A673 (cell line): ENCODE measurements at regions of chr4 and their contacts with region 1.

Region 1: GRCh38 chr4:124111922-124112321 is 600.6 kb downstream of the ANKRD50 start:
- DNase-seq: peak; percentile 74
- H3K4me3 ChIP-seq: no peak overlapping the region
- H3K27ac ChIP-seq: no peak overlapping the region
- H3K4me1 ChIP-seq: peaks cover 5% of the 10 kb centered on the region
- H3K27me3 ChIP-seq: no peaks in the 10 kb centered on the region
- CTCF ChIP-seq: peak; percentile 68

Region 2: DNA sequence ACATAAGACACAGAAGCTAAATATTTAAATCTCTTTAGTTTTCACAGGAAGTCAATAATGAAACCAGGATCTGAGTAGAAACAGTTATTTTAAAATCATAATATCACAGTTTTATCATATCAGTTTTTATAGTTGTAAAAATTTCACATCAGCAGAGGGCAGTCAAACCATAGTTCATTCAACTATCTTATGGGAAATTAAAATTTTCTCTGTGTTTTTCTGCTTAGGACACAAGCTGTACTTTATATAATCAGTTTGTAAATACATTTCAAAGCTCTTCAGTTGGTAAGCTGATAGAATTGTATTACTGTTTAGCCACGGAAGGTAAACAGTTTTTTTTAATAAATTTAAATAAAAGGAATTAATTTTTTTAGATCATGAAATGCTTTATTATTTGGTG is 984.7 kb before region 1 on chr4:
- CTCF ChIA-PET with region 1: no interaction called
- POLR2A ChIA-PET with region 1: no interaction called
- intact Hi-C with region 1: loop called (anchors 5 kb)
- DNase-seq: peak; percentile 55
- H3K4me3 ChIP-seq: no peak overlapping the region
- H3K27ac ChIP-seq: peak overlapping the region; percentile 72
- H3K4me1 ChIP-seq: peaks cover 23% of the 10 kb centered on the region
- H3K27me3 ChIP-seq: no peaks in the 10 kb centered on the region
- CTCF ChIP-seq: peak; percentile 62; the same call in 1 of the 2 replicates

Region 3: DNA sequence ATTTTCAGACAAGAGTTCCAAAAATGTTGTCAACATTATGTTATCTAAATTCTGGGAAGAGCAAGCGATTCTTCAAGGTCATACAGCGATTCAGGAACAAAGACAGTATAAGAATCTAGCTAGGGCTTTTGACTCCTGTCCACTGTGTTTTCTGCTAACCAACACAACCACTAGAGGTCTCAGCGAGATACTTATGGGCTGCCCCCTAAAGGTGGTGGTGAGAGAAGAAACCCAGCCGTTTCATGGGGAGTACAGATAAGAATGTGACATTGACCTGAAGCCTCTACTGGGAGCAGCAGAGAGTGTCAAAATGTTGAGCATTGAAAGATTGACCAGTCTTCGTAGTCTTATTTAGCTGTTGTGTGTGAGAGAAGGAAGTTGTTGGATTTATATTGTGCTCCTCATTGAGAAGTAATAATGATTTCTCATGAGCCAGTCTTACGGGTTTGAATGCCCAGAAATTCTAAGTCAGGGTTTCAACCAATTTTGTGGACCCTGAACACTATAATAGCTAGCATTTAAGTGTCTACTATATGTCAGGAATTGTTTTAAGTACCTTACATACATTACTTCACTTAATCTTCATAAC is 547.1 kb before region 1 on chr4:
- CTCF ChIA-PET with region 1: no interaction called
- POLR2A ChIA-PET with region 1: no interaction called
- intact Hi-C with region 1: loop called (anchors 5 kb)
- DNase-seq: peak; percentile 85
- H3K4me3 ChIP-seq: no peak overlapping the region
- H3K27ac ChIP-seq: no peak overlapping the region
- H3K4me1 ChIP-seq: no peaks in the 10 kb centered on the region
- H3K27me3 ChIP-seq: no peaks in the 10 kb centered on the region
- CTCF ChIP-seq: peak; percentile 97

Region 4: GRCh38 chr4:123776254-123776653 is 335.7 kb before region 1 on chr4:
- CTCF ChIA-PET with region 1: interaction called, 4 read pairs
- POLR2A ChIA-PET with region 1: no interaction called
- intact Hi-C with region 1: loop called (anchors 2 kb)
- DNase-seq: no peak
- H3K4me3 ChIP-seq: no peak overlapping the region
- H3K27ac ChIP-seq: no peak overlapping the region
- H3K4me1 ChIP-seq: no peaks in the 10 kb centered on the region
- H3K27me3 ChIP-seq: no peaks in the 10 kb centered on the region
- CTCF ChIP-seq: no peak

Region 5: DNA sequence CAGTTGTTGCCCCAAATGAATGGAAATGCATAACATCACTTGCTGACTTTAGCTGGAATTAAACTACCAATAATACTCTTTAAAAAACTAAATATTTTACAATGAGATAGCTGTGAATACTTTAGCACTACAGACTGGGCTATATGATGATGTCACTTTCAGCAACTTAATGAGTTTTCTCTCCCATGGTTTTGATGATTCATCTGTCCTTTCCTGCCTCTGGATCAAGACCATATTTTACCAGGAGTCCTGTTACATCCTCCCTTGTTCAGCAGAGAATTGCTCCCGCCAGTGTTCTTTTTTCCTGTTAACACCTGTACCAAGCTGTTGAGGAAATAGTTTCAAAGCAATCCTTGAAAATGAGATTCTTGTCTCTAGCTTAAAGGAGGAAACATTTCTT is 172.3 kb before region 1 on chr4:
- CTCF ChIA-PET with region 1: no interaction called
- POLR2A ChIA-PET with region 1: no interaction called
- intact Hi-C with region 1: no loop called
- DNase-seq: peak; percentile 52
- H3K4me3 ChIP-seq: no peak overlapping the region
- H3K27ac ChIP-seq: no peak overlapping the region
- H3K4me1 ChIP-seq: peaks cover 7% of the 10 kb centered on the region
- H3K27me3 ChIP-seq: no peaks in the 10 kb centered on the region
- CTCF ChIP-seq: no peak

Region 6: DNA sequence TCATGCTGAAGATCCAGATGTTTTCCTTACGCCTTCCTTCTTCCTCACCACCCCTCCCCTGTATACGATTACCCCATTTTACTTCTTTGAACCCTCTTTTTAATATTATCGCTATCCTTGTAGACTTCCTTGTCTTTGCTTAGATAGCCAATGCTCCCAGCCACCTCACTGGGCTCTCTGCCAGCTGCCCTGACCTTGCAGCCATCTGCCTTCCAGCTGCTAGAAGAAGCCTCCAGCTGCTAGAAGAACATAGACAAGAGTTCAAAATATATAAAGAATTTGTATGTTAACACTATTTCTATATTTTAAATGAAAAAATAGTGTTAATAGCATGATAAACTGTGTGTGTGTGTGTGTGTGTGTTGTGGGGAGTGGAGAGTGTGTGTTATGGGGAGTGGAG is 226.0 kb after region 1 on chr4:
- CTCF ChIA-PET with region 1: no interaction called
- POLR2A ChIA-PET with region 1: no interaction called
- intact Hi-C with region 1: no loop called
- DNase-seq: no peak
- H3K4me3 ChIP-seq: no peak overlapping the region
- H3K27ac ChIP-seq: no peak overlapping the region
- H3K4me1 ChIP-seq: peaks cover 4% of the 10 kb centered on the region
- H3K27me3 ChIP-seq: no peaks in the 10 kb centered on the region
- CTCF ChIP-seq: no peak

Region 7: GRCh38 chr4:124437853-124438495 is 326.1 kb after region 1 on chr4:
- CTCF ChIA-PET with region 1: no interaction called
- POLR2A ChIA-PET with region 1: no interaction called
- intact Hi-C with region 1: no loop called
- DNase-seq: no peak
- H3K4me3 ChIP-seq: no peak overlapping the region
- H3K27ac ChIP-seq: no peak overlapping the region
- H3K4me1 ChIP-seq: peaks cover 2% of the 10 kb centered on the region
- H3K27me3 ChIP-seq: no peaks in the 10 kb centered on the region
- CTCF ChIP-seq: no peak

Region 8: DNA sequence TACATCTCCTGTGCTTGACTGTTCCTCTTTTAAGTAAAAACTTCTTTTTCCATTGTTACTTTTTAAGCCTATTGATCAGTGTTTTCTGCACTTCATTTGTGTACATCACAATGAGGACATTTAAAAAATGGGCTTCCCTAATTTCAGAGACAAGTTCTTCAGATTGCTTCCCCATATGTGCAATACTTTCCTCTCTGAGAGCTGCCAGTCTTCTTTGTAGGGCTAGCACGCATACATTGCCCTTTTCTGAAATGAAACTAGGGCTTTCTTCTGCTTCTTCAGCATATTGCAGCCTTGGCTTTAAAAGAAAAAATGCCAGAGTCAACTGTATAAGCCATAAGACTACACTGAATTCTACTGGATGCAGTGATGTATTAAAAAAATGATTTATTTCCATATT is 1240.6 kb after region 1 on chr4:
- CTCF ChIA-PET with region 1: no interaction called
- POLR2A ChIA-PET with region 1: no interaction called
- intact Hi-C with region 1: no loop called
- DNase-seq: no peak
- H3K4me3 ChIP-seq: no peak overlapping the region
- H3K27ac ChIP-seq: no peak overlapping the region
- H3K4me1 ChIP-seq: no peaks in the 10 kb centered on the region
- H3K27me3 ChIP-seq: no peaks in the 10 kb centered on the region
- CTCF ChIP-seq: no peak